HEK293 (cell line): ENCODE measurements at regions of chr10 and their contacts with region 1.

Region 1: DNA sequence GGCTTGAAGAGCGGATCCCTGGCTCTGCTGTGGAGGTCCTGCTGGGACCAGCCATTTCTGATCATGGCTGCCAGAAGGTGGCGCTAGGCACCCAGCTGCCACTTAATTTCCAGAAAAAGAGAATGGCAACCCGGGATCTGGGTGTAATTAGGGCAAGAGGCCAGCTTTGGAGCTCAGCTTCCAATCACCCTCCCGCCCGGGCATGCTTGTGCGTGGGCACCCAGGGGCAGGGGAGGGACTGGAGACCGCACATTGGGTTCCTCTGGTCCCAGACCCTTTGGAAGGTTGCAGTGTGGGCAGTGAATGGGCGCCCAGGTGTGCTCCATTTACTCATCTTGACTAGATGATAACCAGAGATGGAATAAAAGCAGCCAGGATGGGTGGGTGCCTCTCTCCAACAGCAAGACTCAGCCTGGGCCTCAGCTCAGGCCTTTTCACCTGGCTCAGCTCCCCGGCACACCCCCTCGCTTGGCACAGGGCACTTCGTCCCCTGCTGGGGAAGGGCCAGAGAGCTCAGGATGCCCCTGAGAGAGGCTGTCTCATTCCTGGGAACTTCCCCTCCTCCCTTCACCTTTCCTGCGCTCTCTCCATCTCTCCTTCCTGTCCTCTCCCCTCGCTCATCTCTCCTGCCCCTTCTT is 14.7 kb downstream of the FAM241B start:
- H3K4me3 ChIP-seq: no peak overlapping the region
- H3K27ac ChIP-seq: no peak overlapping the region
- H3K4me1 ChIP-seq: no peaks in the 10 kb centered on the region
- CTCF ChIP-seq: peak; percentile 57

Region 2: GRCh38 chr10:69659241-69660038 is 14.7 kb after region 1 on chr10:
- CTCF ChIA-PET with region 1: interaction called, 11 read pairs
- POLR2A ChIA-PET with region 1: no interaction called
- H3K4me3 ChIP-seq: no peak overlapping the region
- H3K27ac ChIP-seq: no peak overlapping the region
- H3K4me1 ChIP-seq: no peaks in the 10 kb centered on the region
- CTCF ChIP-seq: no peak